Body of pancreas (tissue), 4 donors: ENCODE measurements at regions of chrX and their contacts with region 1.

Region 1: DNA sequence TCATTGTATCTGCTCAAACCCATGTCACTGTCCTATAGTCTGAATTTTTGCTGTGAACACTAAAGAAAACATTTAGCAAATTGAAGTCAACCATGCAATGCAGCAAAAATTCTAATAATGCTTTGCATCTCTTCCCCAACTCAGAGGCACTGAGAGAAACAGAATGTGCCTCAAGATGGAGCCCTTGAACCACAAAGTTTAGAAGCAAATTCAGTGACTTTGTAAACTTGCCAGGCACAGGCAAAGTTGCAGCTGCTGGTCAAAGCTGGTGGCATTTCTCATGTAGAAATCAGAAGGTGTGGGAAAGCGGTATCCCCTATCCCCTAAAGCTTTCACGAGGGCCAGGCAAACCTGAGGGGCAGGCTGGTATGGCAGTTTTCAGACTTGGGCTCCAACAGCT is 121.7 kb upstream of the DIPK2B start:
- DNase-seq: peak; percentile 38 to 69 (median 60)
- ATAC-seq: peak; percentile 58
- H3K4me3 ChIP-seq: no peak overlapping the region
- H3K27ac ChIP-seq: no peak overlapping the region
- H3K4me1 ChIP-seq: no peaks in the 10 kb centered on the region
- H3K27me3 ChIP-seq: no peaks in the 10 kb centered on the region
- CTCF ChIP-seq: peak; percentile 12 to 82 (median 54)
- POLR2A ChIP-seq: no peak

Region 2: GRCh38 chrX:45070116-45071007 is 252.0 kb before region 1 on chrX:
- intact Hi-C with region 1: no loop called
- DNase-seq: peak in 1 of 4 donors; percentile 17
- ATAC-seq: no peak
- H3K4me3 ChIP-seq: no peak overlapping the region
- H3K27ac ChIP-seq: no peak overlapping the region
- H3K4me1 ChIP-seq: no peaks in the 10 kb centered on the region
- H3K27me3 ChIP-seq: no peaks in the 10 kb centered on the region
- CTCF ChIP-seq: peak; percentile 30 to 68 (median 52)
- POLR2A ChIP-seq: no peak

Region 3: DNA sequence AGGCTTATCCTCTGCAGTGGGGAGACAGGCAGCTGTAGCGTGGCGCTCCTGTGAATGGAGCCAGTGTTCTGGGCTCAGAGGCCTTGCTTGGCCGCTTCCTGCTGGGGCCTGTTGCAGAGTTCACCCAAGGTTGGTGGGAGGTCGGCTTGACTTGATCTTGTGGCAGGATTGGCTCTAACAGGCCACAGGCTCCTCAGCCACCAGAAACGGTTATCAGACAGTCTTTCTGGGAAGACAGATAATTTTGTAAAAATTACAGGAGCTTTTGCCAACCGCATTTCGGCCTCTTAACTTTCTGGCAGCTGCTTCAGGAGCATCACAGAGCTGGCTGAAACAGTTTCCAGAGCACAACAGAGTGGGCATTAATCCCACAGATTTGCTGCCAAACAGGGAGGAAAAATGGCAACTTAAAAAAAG is 188.1 kb before region 1 on chrX:
- intact Hi-C with region 1: no loop called
- DNase-seq: no peak
- ATAC-seq: no peak
- H3K4me3 ChIP-seq: no peak overlapping the region
- H3K27ac ChIP-seq: no peak overlapping the region
- H3K4me1 ChIP-seq: no peaks in the 10 kb centered on the region
- H3K27me3 ChIP-seq: no peaks in the 10 kb centered on the region
- CTCF ChIP-seq: no peak
- POLR2A ChIP-seq: no peak

Region 4: GRCh38 chrX:45186643-45187026 is 135.7 kb before region 1 on chrX:
- intact Hi-C with region 1: no loop called
- DNase-seq: no peak
- ATAC-seq: no peak
- H3K4me3 ChIP-seq: no peak overlapping the region
- H3K27ac ChIP-seq: no peak overlapping the region
- H3K4me1 ChIP-seq: no peaks in the 10 kb centered on the region
- H3K27me3 ChIP-seq: no peaks in the 10 kb centered on the region
- CTCF ChIP-seq: no peak
- POLR2A ChIP-seq: no peak

Region 5: DNA sequence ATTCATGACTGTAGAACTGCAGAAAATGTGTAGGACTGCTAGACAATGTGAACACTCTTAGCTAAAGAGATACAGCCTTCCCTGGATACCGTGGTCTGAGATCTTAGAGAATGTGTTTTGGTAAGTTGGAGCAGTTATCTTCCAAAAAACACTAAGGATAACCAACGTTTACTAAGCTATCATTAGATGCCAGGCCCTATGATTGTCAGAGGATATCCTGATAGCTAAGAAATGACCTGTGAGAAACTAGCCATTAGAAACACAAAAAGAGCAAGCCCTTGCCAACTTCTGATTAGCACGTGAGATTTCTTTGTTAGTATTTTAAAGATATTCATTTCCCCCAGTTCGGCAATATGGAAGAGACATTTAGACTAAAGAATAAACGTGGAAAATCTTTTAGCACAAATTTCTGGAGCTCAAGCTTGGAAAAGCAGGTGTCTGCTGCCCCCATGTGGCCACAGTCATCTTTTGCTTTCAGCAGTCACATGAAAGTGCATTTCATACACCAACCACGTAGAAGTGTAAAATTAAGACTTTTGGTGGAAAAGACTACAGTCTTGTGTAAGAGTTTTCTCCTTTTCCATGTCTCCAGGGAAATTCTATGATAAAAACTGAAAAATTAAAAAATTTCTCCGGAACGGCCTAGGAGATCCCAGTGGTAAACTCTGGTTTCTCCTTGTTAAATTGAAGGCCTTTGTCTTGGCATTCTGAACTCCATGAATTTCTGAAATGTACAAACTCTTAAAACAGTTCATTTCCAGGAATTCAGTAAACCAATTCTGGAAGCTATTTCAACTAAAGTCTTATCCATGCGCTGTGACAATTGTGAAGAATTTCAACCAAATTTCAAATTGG is 1086.4 kb after region 1 on chrX:
- intact Hi-C with region 1: loop called (anchors 10 kb)
- DNase-seq: peak; percentile 64 to 87 (median 73)
- ATAC-seq: no peak
- H3K4me3 ChIP-seq: no peak overlapping the region
- H3K27ac ChIP-seq: no peak overlapping the region
- H3K4me1 ChIP-seq: no peaks in the 10 kb centered on the region
- H3K27me3 ChIP-seq: no peaks in the 10 kb centered on the region
- CTCF ChIP-seq: peak; percentile 48 to 86 (median 61)
- POLR2A ChIP-seq: no peak